Sigmoid colon (tissue), 7 donors: ENCODE measurements at regions of chr7 and their contacts with region 1.

Region 1: DNA sequence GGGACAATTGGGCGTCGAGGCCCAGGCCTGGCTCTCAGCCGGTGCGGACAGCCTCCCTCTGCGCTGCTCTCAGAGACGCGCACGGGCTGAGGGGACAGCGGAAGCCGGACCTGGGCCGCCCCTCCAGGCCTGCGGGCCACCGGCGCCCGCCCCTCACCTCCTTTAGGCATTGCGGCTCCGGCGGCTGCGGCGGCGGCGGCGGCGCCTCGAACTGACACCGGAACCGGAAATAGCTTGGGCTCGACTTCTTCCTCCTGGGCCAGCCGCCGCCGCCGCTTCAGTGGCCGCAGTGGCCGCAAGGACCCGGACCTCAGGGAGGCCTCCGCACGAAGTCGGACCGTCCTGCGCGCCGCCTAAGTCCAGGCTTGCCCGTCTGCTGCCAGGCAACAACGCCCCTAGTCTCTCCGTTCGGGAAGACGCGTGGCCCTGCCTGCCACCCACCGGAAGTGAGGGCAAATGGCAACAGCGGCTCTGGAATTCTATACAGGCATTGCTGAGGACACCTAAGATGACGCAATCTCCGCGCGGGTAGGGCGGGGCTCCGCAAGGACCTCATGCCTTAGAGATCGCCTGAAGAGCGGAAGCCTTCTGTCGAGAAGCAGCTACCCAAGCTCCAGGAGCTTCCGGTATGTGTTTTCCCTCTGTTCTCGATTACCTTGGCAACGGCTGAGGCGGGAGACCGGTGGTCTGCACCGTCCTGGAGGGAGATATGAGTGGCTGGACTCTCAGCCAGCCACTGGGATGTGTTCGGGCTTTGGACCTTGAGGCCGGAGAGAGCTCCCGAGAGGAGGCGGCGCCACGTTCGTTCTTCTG is at the starts of genes BUD31 and PDAP1:
- DNase-seq: peak; percentile 97
- H3K4me3 ChIP-seq: peak within 1 kb of the TSS; percentile 80 to 99 (median 96)
- H3K27ac ChIP-seq: peak within 1 kb of the TSS; percentile 95 to 99 (median 96)
- H3K4me1 ChIP-seq: peaks cover 0 to 58% (median 51%) of the 10 kb centered on the region in 4 donors
- H3K27me3 ChIP-seq: no peaks in the 10 kb centered on the region
- CTCF ChIP-seq: peak in 1 of 4 experiments; percentile 42
- EP300 ChIP-seq: peak in 2 of 4 donors; percentile 7 to 44
- POLR2A ChIP-seq: peak; percentile 75 to 81
- total RNA-seq, gene BUD31: 44.6 to 89.8 (median 69.3) TPM
- total RNA-seq, gene PDAP1: 84.5 to 89.5 (median 85.1) TPM

Region 2: DNA sequence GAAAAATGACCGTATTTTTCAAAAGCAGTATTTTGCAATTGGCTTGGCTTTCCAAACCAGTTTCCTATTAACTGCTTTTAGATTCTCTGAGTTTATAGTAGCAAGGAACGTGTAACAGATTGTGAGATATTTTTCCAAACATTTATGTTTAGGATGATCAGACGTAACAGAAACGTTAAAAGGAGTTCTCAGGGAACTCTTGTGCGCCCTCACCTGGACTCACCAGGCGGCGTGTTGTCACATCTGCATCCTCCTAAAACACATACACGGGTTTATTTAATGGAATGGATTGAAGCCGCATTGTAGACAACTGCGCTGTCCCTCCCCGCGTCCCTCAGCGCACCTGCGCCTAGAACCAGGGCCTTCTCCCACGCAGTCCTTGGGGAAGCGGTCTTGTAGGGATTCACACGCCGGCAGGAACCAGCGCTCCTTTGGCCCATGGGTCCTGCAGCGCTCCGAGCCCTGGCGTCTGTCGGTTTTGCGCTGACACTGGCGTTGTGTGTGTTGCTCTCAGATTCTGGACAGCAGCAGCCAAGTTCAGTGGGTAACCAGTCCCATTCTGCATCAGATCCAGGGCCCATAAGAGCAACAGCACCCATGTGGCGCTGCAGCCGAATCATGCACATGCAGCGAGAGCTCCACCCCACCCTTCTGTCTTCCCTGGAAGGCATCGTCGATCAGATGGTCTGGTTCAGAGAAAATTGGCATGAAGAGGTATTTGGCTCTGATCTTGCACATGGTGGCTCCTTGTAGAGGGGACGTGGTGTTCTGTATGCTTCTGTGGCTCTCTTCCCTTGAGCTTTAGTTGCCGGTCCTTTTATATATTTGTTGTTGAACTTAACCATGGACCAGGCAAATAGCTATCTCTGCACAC is 415.3 kb before region 1 on chr7:
- intact Hi-C with region 1: no loop called
- DNase-seq: peak; percentile 39
- H3K4me3 ChIP-seq: no peak overlapping the region
- H3K27ac ChIP-seq: no peak overlapping the region
- H3K4me1 ChIP-seq: no peaks in the 10 kb centered on the region
- H3K27me3 ChIP-seq: no peaks in the 10 kb centered on the region
- CTCF ChIP-seq: no peak
- EP300 ChIP-seq: no peak
- POLR2A ChIP-seq: no peak

Region 3: DNA sequence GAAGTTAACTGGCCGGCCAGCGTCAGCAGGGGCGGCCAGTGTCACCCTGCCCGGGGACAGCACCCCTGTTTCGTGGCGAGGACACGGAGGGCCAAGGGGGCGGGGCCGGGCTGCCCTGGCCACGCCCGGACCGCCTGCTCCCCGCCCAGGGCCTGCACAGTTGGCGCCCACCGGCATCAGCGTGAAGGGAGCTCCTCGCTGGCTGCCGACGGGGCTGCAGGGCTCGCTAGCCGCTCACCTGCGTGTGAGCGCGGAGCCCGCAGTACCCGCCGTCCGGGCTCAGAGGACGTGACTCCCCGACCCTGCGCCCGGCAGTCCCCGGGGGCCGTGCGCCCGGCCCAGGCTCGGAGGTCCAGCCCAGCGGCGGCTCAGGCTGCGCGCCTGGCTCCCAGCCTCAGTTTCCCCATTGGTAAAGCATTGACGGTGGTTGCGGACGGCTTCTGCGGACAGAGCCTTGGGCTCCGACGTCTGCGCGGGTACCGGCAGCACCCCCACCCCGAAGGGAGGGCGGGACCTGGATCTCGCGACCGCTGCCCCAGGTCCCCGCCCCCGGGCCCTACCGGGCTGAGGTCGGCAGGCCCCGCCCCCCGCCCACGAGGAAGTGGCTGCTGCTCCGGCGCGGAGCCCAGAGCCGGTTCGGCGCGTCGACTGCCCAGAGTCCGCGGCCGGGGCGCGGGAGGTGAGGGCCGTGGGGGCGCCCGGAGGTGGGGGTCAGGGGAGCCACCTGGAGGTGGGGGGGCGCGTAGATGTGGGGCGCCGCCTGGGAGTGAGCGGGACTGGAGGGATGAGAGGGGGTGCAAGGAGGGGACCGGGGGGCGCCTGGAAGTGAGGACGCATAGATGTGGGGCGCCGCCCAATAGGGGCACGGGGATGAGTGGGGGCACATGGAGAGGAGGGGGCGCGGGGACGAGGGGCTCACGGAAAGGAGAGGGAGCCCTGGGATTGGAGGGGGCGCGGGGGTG is 34.2 kb before region 1 on chr7 and contains the start of gene ARPC1B:
- intact Hi-C with region 1: loop called (anchors 1 kb)
- DNase-seq: peak; percentile 87
- H3K4me3 ChIP-seq: peak within 1 kb of the TSS; percentile 74 to 100 (median 80)
- H3K27ac ChIP-seq: peak within 1 kb of the TSS; percentile 82 to 89 (median 85)
- H3K4me1 ChIP-seq: peaks cover 0 to 37% (median 28%) of the 10 kb centered on the region in 4 donors
- H3K27me3 ChIP-seq: no peaks in the 10 kb centered on the region
- CTCF ChIP-seq: no peak
- EP300 ChIP-seq: no peak
- POLR2A ChIP-seq: peak in 1 of 2 donors; percentile 29
- total RNA-seq, gene ARPC1B: 70.3 to 136 (median 105) TPM

Region 4: DNA sequence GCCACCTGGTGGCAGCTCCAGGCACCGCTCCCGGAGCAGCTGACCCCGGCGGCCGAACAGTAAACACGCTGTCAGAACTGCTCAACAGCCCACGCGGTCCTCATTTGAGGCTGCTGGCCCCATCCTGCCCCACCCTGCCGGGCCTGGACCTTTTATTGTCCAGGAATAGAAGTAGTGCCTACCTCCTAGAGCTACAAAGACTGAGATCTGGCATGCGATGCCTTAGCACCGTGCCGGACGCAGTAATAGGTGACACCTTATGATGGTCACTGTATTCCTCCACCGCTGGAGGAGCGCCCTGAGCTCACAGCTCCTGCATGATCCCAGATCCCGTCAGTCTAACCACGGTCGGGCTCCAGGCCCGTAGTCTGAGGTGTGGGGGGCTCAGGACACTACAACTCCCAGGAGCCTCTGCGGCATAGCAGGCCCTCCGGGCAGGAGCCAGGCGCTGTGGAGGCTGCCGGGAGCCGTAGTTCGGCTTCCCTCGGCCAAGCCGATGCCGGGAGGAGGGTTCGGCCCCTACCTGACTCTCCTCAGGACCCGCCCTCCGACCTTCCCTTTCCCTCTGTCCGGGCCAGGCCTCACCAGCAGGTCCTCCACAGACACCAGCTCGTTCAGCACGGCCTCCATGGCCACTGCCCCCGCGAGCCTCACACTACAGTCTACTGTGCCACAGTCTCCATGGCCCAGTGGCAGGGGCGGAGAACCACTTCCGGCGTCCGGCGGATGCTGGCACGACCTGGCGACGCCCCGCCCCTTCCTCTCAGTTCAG is 1836.0 kb after region 1 on chr7 and contains the start of gene FIS1:
- intact Hi-C with region 1: loop called (anchors 5 kb)
- DNase-seq: peak; percentile 97
- H3K4me3 ChIP-seq: peak within 1 kb of the TSS; percentile 60 to 91 (median 84)
- H3K27ac ChIP-seq: peak within 1 kb of the TSS; percentile 89 to 99 (median 96)
- H3K4me1 ChIP-seq: peaks cover 0 to 41% (median 26%) of the 10 kb centered on the region in 4 donors
- H3K27me3 ChIP-seq: no peaks in the 10 kb centered on the region
- CTCF ChIP-seq: peak; percentile 81 to 97 (median 92)
- EP300 ChIP-seq: no peak
- POLR2A ChIP-seq: peak; percentile 64 to 87
- total RNA-seq, gene FIS1: 237 to 443 (median 426) TPM